Panc1 (cell line): ENCODE measurements at regions of chr14 and their contacts with region 1.

Region 1: DNA sequence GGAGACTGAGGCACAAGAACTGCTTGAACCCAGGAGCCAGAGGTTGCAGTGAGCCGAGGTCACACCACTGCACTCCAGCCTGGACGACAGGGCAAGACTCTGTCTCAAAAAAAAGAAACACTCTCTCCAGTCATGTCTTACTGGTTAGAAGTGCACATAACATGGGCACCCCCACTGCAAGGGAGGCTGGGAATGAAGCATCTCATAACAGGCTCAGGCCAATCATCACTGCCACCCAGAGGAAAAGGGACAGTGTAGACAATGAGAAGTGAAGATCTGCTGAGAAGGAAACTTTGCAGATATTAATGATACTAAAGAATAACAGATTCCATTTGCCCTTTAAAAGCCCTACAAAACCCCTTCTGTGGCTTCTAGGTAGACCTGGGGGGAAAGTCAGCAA is 66.9 kb downstream of the ITPK1 start:
- DNase-seq: no peak
- ATAC-seq: no peak
- H3K4me3 ChIP-seq: no peak overlapping the region
- H3K27ac ChIP-seq: no peak overlapping the region
- H3K4me1 ChIP-seq: no peaks in the 10 kb centered on the region
- H3K27me3 ChIP-seq: no peaks in the 10 kb centered on the region
- CTCF ChIP-seq: no peak

Region 2: GRCh38 chr14:91470216-91470615 is 1578.6 kb before region 1 on chr14:
- CTCF ChIA-PET with region 1: no interaction called
- POLR2A ChIA-PET with region 1: interaction called, 10 read pairs
- in situ Hi-C with region 1: no loop called
- intact Hi-C with region 1: no loop called
- DNase-seq: no peak
- ATAC-seq: no peak
- H3K4me3 ChIP-seq: no peak overlapping the region
- H3K27ac ChIP-seq: no peak overlapping the region
- H3K4me1 ChIP-seq: no peaks in the 10 kb centered on the region
- H3K27me3 ChIP-seq: no peaks in the 10 kb centered on the region
- CTCF ChIP-seq: no peak

Region 3: DNA sequence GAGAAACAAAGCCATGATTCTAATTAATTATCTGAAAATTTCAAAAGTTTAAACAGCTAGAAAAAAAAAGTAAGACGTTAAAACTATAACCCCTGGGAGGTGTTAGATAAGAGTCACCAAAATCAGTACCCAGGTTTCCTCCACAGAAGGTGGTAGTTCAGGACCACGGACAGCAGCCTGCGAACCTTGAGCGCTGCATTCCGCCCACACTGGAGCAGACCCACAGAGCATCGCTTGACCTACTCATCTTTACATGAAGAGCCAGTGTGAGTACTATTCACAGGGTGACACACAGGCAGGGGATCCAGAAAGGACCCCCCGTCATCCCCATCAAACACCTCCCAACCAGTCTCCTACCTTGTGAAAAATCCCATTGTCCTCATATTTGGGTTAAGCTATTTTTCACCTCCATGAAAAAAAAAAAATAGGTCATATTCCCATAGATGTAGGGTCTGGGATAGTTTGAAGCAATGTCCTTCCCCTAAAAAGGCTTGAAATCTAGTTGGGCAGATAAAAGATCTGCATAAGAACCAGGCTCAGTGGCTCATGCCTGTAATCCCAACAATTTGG is 134.7 kb before region 1 on chr14:
- CTCF ChIA-PET with region 1: no interaction called
- POLR2A ChIA-PET with region 1: no interaction called
- in situ Hi-C with region 1: no loop called
- intact Hi-C with region 1: no loop called
- DNase-seq: no peak
- ATAC-seq: no peak
- H3K4me3 ChIP-seq: no peak overlapping the region
- H3K27ac ChIP-seq: no peak overlapping the region
- H3K4me1 ChIP-seq: no peaks in the 10 kb centered on the region
- H3K27me3 ChIP-seq: no peaks in the 10 kb centered on the region; the same call in 1 of the 2 replicates
- CTCF ChIP-seq: no peak